Calu3 (cell line): ENCODE measurements at regions of chr19 and their contacts with region 1.

Region 1: DNA sequence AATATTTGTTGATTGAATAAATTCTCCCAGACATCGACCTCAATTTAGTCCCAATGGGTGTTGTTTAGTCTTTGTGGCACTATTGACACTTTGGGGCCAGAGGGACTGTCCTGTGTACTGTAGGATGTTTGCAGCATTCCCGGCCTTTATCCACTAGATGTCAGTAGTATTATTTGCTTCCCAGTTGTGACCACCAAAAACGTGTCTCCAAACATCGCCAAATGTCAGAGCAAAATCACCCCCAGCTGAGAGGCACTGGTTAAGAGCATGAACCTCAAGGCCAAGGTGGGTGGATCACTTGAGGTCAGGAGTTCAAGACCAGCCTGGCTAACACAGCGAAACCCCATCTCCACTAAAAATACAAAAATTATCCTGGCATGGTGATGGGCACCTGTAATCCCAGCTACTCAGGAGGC is 15.4 kb downstream of the NLRP12 start:
- DNase-seq: peak; percentile 38
- H3K4me3 Mint-ChIP-seq: no peak overlapping the region
- H3K27ac Mint-ChIP-seq: no peak overlapping the region
- H3K4me1 Mint-ChIP-seq: peaks cover 7% of the 10 kb centered on the region
- H3K27me3 Mint-ChIP-seq: no peaks in the 10 kb centered on the region
- CTCF ChIP-seq: peak; percentile 83

Region 2: GRCh38 chr19:53537480-53538383 is 271.0 kb before region 1 on chr19 and contains the start of gene ZNF331:
- CTCF ChIA-PET with region 1: no interaction called
- intact Hi-C with region 1: no loop called
- DNase-seq: no peak
- H3K4me3 Mint-ChIP-seq: no peak within 1 kb of the TSS
- H3K27ac Mint-ChIP-seq: no peak within 1 kb of the TSS
- H3K4me1 Mint-ChIP-seq: no peaks in the 10 kb centered on the region
- H3K27me3 Mint-ChIP-seq: no peaks in the 10 kb centered on the region
- CTCF ChIP-seq: no peak
- total RNA-seq, gene ZNF331: 8.5 and 9.4 TPM in 2 replicates

Region 3: GRCh38 chr19:53730390-53730789 is 78.3 kb before region 1 on chr19:
- CTCF ChIA-PET with region 1: no interaction called
- intact Hi-C with region 1: no loop called
- DNase-seq: no peak
- H3K4me3 Mint-ChIP-seq: no peak overlapping the region
- H3K27ac Mint-ChIP-seq: no peak overlapping the region
- H3K4me1 Mint-ChIP-seq: no peaks in the 10 kb centered on the region
- H3K27me3 Mint-ChIP-seq: no peaks in the 10 kb centered on the region
- CTCF ChIP-seq: no peak

Region 4: DNA sequence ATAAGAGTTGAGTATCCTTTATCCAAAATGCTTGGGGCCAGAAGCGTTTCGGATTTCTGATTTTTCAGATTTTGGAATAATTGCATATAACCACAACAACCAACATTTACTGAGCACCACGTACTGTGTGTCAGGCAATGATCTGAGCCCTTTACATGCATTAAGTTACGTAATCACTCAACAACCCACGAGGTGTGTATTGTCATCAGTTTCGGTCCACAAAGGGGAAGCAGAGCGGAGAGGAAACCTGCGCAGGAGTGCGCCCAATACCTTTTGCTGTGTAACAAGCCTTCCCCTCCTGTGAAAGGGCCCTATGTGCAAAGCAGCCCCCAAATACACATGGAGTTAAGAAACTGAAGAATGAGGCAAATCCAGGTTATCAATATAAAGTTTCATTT is 36.1 kb after region 1 on chr19:
- CTCF ChIA-PET with region 1: no interaction called
- intact Hi-C with region 1: loop called (anchors 5 kb)
- DNase-seq: no peak
- H3K4me3 Mint-ChIP-seq: no peak overlapping the region
- H3K27ac Mint-ChIP-seq: no peak overlapping the region
- H3K4me1 Mint-ChIP-seq: peaks cover 15% of the 10 kb centered on the region
- H3K27me3 Mint-ChIP-seq: no peaks in the 10 kb centered on the region
- CTCF ChIP-seq: no peak

Region 5: DNA sequence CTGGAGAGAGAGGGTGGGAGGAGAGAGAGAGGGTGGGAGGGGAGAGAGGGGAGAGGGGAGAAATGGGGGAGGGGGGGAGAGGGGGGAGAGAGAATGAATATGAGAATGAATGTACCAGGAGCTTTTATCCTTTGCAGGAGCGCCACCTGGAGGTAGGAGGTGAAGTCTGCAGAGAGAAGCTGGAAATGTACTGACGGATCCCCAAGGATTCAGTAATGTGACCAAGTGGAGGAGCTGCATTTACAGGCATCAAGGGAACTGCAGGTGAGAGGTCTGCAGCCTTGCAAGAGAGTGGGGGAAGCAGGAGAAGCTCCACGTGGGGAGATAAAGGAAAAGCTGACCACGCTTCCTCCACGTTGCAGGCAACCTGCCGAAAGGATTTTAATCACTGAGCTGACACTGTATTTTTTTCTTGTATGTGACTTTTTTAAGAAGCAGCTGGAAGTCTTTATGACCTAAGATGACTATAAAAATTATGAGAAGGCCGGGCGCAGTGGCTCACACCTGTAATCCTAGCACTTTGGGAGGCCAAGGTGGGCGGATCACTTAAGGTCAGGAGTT is 221.3 kb after region 1 on chr19:
- CTCF ChIA-PET with region 1: interaction called, 19 read pairs
- intact Hi-C with region 1: loop called (anchors 1 kb)
- DNase-seq: peak; percentile 83
- H3K4me3 Mint-ChIP-seq: no peak overlapping the region
- H3K27ac Mint-ChIP-seq: no peak overlapping the region
- H3K4me1 Mint-ChIP-seq: peaks cover 21% of the 10 kb centered on the region
- H3K27me3 Mint-ChIP-seq: no peaks in the 10 kb centered on the region
- CTCF ChIP-seq: peak; percentile 83

Region 6: GRCh38 chr19:54096617-54097129 is 288.0 kb after region 1 on chr19:
- CTCF ChIA-PET with region 1: no interaction called
- intact Hi-C with region 1: loop called (anchors 10 kb)
- DNase-seq: peak; percentile 22
- H3K4me3 Mint-ChIP-seq: peak overlapping the region; percentile 64
- H3K27ac Mint-ChIP-seq: peak overlapping the region; percentile 24
- H3K4me1 Mint-ChIP-seq: peaks cover 14% of the 10 kb centered on the region
- H3K27me3 Mint-ChIP-seq: peaks cover 31% of the 10 kb centered on the region
- CTCF ChIP-seq: no peak